Activated B cell treated with CpG ODN at 0.5 μM for 24 hours (primary cell): ENCODE measurements at regions of chr15 and their contacts with region 1.

Region 1: DNA sequence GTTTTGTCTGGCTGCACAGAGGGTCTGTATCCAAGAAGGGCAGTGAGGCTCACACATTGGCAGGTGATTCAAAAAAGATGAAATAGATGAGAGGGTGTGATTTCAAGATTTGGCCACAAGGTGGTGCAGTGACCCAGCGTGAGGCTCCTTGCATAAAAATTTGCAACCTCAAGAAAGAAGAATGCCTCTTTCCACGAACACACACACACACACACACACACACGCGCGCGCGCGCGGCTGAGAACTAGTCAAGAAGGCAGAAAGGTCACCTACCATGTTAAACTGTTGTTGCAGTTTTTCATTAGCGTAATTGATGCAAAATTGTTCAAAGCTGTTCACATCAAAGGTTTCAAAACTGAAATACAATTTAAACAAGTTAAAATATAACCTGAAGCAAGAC is 39.2 kb downstream of the MYO5C start:
- DNase-seq: peak; percentile 46
- ATAC-seq: peak; percentile 78
- H3K4me3 Mint-ChIP-seq: peak overlapping the region; percentile 60
- H3K27ac Mint-ChIP-seq: peak overlapping the region; percentile 68
- H3K4me1 Mint-ChIP-seq: peaks cover 48% of the 10 kb centered on the region
- H3K27me3 Mint-ChIP-seq: no peaks in the 10 kb centered on the region
- CTCF ChIP-seq: no peak

Region 2: GRCh38 chr15:52217186-52217585 is 39.2 kb before region 1 on chr15:
- CTCF ChIA-PET with region 1: interaction called, 10 read pairs
- POLR2A ChIA-PET with region 1: interaction called, 10 read pairs
- intact Hi-C with region 1: no loop called
- DNase-seq: no peak
- ATAC-seq: peak; percentile 33
- H3K4me3 Mint-ChIP-seq: no peak overlapping the region
- H3K27ac Mint-ChIP-seq: no peak overlapping the region
- H3K4me1 Mint-ChIP-seq: peaks cover 35% of the 10 kb centered on the region
- H3K27me3 Mint-ChIP-seq: no peaks in the 10 kb centered on the region
- CTCF ChIP-seq: no peak

Region 3: DNA sequence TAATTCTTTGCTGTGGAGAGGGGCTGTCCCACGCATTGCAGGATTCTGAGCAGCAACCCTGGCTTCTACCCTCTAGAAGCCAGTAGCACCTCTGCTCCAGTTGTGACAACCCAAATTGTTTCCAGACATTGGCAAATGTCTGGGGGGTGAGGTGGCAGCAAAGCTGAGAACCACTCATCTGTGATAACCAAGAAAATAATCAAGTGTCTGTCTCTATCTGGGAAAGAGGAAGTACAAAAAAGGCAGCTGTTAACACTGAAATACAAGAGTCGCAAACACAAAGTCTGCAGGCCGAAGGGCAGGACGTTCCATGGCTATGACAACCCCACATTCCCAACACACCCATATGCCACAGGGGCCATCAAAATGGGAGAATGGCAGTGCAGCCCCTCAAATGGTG is 23.0 kb before region 1 on chr15:
- CTCF ChIA-PET with region 1: interaction called, 66 read pairs
- POLR2A ChIA-PET with region 1: interaction called, 297 read pairs
- intact Hi-C with region 1: loop called (anchors 1 kb)
- DNase-seq: peak; percentile 40
- ATAC-seq: peak; percentile 38
- H3K4me3 Mint-ChIP-seq: peak overlapping the region; percentile 84
- H3K27ac Mint-ChIP-seq: peak overlapping the region; percentile 99
- H3K4me1 Mint-ChIP-seq: peaks cover 91% of the 10 kb centered on the region
- H3K27me3 Mint-ChIP-seq: no peaks in the 10 kb centered on the region
- CTCF ChIP-seq: no peak

Region 4: DNA sequence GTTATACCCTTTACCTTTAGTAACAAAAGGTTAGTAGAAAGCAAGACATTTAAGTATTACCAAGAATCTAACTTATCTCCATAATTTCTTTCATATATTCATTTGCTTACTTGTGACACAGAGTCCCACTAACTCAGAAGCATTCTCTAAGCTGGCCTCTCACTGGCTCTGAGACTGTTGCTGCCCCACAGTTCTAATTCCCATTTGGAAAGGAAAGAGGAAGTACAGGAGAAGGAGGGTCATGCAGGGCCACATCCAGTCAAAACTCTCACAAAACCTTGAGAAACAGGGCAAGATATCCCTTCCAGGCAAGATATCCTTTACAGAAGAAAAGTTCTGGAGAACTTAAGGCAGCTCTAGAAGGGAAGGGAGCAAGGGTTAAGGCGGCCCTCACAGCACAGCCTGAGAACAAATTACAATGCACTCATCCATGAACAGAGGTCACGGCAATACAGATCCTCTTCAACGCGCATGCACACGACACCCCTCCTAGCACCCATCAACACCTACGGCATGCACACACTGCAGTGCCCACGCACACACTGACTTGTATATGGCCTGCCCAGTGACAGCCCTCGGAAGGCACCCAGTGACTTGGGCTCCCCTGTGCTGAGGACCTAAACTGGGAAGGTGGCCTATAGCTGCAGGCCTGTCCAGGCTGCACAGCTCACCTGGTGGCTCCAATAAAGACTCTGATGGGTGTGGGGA is 52.2 kb after region 1 on chr15:
- CTCF ChIA-PET with region 1: interaction called, 9 read pairs
- POLR2A ChIA-PET with region 1: interaction called, 12 read pairs
- intact Hi-C with region 1: loop called (anchors 1 kb)
- DNase-seq: no peak
- ATAC-seq: peak; percentile 80
- H3K4me3 Mint-ChIP-seq: peak overlapping the region; percentile 7
- H3K27ac Mint-ChIP-seq: peak overlapping the region; percentile 80
- H3K4me1 Mint-ChIP-seq: peaks cover 23% of the 10 kb centered on the region
- H3K27me3 Mint-ChIP-seq: no peaks in the 10 kb centered on the region
- CTCF ChIP-seq: no peak

Region 5: GRCh38 chr15:52331490-52332240 is 75.3 kb after region 1 on chr15:
- CTCF ChIA-PET with region 1: interaction called, 20 read pairs
- POLR2A ChIA-PET with region 1: no interaction called
- intact Hi-C with region 1: loop called (anchors 1 kb)
- DNase-seq: no peak
- ATAC-seq: peak; percentile 99
- H3K4me3 Mint-ChIP-seq: no peak overlapping the region
- H3K27ac Mint-ChIP-seq: peak overlapping the region; percentile 15
- H3K4me1 Mint-ChIP-seq: peaks cover 13% of the 10 kb centered on the region
- H3K27me3 Mint-ChIP-seq: no peaks in the 10 kb centered on the region
- CTCF ChIP-seq: no peak

Region 6: GRCh38 chr15:52563604-52564003 is 307.2 kb after region 1 on chr15:
- CTCF ChIA-PET with region 1: no interaction called
- POLR2A ChIA-PET with region 1: interaction called, 4 read pairs
- intact Hi-C with region 1: loop called (anchors 2 kb)
- DNase-seq: no peak
- ATAC-seq: no peak
- H3K4me3 Mint-ChIP-seq: no peak overlapping the region
- H3K27ac Mint-ChIP-seq: no peak overlapping the region
- H3K4me1 Mint-ChIP-seq: peaks cover 79% of the 10 kb centered on the region
- H3K27me3 Mint-ChIP-seq: no peaks in the 10 kb centered on the region
- CTCF ChIP-seq: no peak

Region 7: GRCh38 chr15:52609593-52609992 is 353.2 kb after region 1 on chr15:
- CTCF ChIA-PET with region 1: no interaction called
- POLR2A ChIA-PET with region 1: no interaction called
- intact Hi-C with region 1: no loop called
- DNase-seq: no peak
- ATAC-seq: no peak
- H3K4me3 Mint-ChIP-seq: no peak overlapping the region
- H3K27ac Mint-ChIP-seq: no peak overlapping the region
- H3K4me1 Mint-ChIP-seq: peaks cover 20% of the 10 kb centered on the region
- H3K27me3 Mint-ChIP-seq: no peaks in the 10 kb centered on the region
- CTCF ChIP-seq: no peak